Vagina (tissue), 2 donors: ENCODE measurements at regions of chr5 and their contacts with region 1.

Region 1: GRCh38 chr5:40914835-40915234 is 5.5 kb downstream of the C7 start:
- DNase-seq: no peak
- H3K4me3 ChIP-seq: peak overlapping the region in 1 of 2 donors; percentile 0
- H3K27ac ChIP-seq: no peak overlapping the region
- H3K4me1 ChIP-seq: no peaks in the 10 kb centered on the region
- H3K27me3 ChIP-seq: no peaks in the 10 kb centered on the region
- CTCF ChIP-seq: no peak
- POLR2A ChIP-seq: no peak

Region 2: GRCh38 chr5:40991168-40991980 is 76.5 kb after region 1 on chr5:
- intact Hi-C with region 1: loop called (anchors 5 kb)
- DNase-seq: peak in 1 of 2 donors; percentile 90
- H3K4me3 ChIP-seq: no peak overlapping the region
- H3K27ac ChIP-seq: peak overlapping the region; percentile 73
- H3K4me1 ChIP-seq: peaks cover 26% of the 10 kb centered on the region
- H3K27me3 ChIP-seq: no peaks in the 10 kb centered on the region
- CTCF ChIP-seq: no peak
- POLR2A ChIP-seq: no peak